ENCODE measurements at regions of chr2 and their contacts with region 1.

Region 1: GRCh38 chr2:165698444-165698894 is 95.6 kb downstream of the GALNT3 start:
- DNase-seq: peak; percentile 43
- ATAC-seq: peak; percentile 87
- H3K4me3 ChIP-seq: no peak overlapping the region
- H3K27ac ChIP-seq: no peak overlapping the region
- H3K4me1 ChIP-seq: no peaks in the 10 kb centered on the region
- H3K27me3 ChIP-seq: no peaks in the 10 kb centered on the region; the same call in 1 of the 2 replicates
- CTCF ChIP-seq: peak; percentile 43
- POLR2A ChIP-seq: no peak
- RAD21 ChIP-seq: peak; percentile 37

Region 2: DNA sequence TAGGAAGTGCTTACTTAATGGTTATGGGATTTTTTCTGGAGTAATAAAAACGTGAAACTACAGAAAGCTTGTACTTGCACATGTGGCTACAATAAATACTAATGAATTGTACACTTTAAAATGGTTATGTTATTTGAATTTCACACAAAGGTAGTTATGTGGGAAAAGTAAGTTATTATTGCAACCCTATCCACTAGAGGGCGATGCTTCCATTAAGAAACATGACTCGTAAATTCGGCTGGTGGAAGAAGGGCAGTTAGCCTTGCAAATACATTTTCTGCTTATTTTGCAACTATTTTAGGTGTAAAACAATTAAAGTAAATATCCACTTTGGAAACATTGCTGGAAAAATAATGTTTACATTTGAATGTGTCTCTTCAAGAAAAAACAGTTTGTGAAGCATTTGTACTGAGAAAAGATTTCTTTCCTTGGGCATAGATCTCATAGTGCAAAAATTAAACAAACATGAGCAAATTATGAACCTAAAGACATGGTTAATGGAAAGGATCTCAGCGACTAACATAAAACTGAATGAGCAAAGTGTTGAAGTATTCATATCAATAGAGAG is 297.1 kb before region 1 on chr2:
- CTCF ChIA-PET with region 1: no interaction called
- POLR2A ChIA-PET with region 1: no interaction called
- dilution Hi-C with region 1: no loop called
- in situ Hi-C with region 1: no loop called
- intact Hi-C with region 1: loop called (anchors 1 kb)
- DNase-seq: peak; percentile 79
- ATAC-seq: peak; percentile 59
- H3K4me3 ChIP-seq: no peak overlapping the region
- H3K27ac ChIP-seq: no peak overlapping the region
- H3K4me1 ChIP-seq: no peaks in the 10 kb centered on the region
- H3K27me3 ChIP-seq: no peaks in the 10 kb centered on the region
- CTCF ChIP-seq: peak; percentile 75
- POLR2A ChIP-seq: no peak
- RAD21 ChIP-seq: peak; percentile 70

Region 3: DNA sequence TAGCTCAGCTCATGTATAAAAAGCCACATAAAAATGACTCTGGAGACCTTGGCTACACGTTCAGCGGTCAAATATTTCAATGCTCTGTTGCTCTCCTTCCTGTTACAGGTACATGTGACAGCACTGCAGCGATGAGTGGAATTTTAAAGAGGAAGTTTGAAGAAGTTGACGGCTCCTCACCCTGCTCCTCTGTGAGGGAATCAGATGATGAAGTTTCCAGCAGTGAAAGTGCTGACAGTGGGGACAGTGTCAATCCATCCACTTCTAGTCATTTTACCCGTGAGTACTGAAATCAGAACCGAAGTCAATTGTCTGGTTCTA is 103.6 kb before region 1 on chr2:
- CTCF ChIA-PET with region 1: no interaction called
- POLR2A ChIA-PET with region 1: no interaction called
- dilution Hi-C with region 1: no loop called
- in situ Hi-C with region 1: no loop called
- intact Hi-C with region 1: no loop called
- DNase-seq: no peak
- ATAC-seq: no peak
- H3K4me3 ChIP-seq: no peak overlapping the region
- H3K27ac ChIP-seq: no peak overlapping the region
- H3K4me1 ChIP-seq: no peaks in the 10 kb centered on the region
- H3K27me3 ChIP-seq: no peaks in the 10 kb centered on the region
- CTCF ChIP-seq: no peak
- POLR2A ChIP-seq: no peak
- RAD21 ChIP-seq: no peak

Region 4: DNA sequence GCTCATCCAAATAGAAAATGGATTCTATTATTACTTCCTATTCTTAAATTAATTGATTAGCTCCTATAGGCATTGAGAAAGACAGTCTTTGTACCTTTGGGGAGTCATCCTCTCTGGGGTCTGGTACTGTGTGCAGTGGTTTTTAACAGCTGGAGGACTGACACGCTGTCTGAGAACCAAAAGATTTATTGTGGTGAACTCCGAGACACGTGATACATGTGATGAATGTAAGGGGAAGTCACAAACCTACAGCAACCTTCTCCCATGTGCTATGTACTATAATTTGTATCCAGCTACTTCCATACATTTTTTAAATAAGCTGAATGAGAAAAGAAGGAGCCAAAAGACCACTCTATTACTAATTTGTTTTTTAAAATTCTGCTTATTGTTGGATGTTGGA is 38.1 kb before region 1 on chr2:
- CTCF ChIA-PET with region 1: no interaction called
- POLR2A ChIA-PET with region 1: no interaction called
- dilution Hi-C with region 1: no loop called
- in situ Hi-C with region 1: no loop called
- intact Hi-C with region 1: no loop called
- DNase-seq: no peak
- ATAC-seq: no peak
- H3K4me3 ChIP-seq: no peak overlapping the region
- H3K27ac ChIP-seq: no peak overlapping the region
- H3K4me1 ChIP-seq: no peaks in the 10 kb centered on the region
- H3K27me3 ChIP-seq: no peaks in the 10 kb centered on the region
- CTCF ChIP-seq: no peak
- POLR2A ChIP-seq: no peak
- RAD21 ChIP-seq: no peak

Region 5: GRCh38 chr2:165675551-165675968 is 22.9 kb before region 1 on chr2:
- CTCF ChIA-PET with region 1: no interaction called
- POLR2A ChIA-PET with region 1: no interaction called
- dilution Hi-C with region 1: no loop called
- in situ Hi-C with region 1: no loop called
- intact Hi-C with region 1: no loop called
- DNase-seq: no peak
- ATAC-seq: no peak
- H3K4me3 ChIP-seq: no peak overlapping the region
- H3K27ac ChIP-seq: no peak overlapping the region
- H3K4me1 ChIP-seq: no peaks in the 10 kb centered on the region
- H3K27me3 ChIP-seq: no peaks in the 10 kb centered on the region
- CTCF ChIP-seq: no peak
- POLR2A ChIP-seq: no peak
- RAD21 ChIP-seq: no peak

Measured in IMR-90 (cell line).